H1 (cell line): ENCODE measurements at regions of chr2 and their contacts with region 1.

Region 1: GRCh38 chr2:160406591-160407392 is 86.8 kb downstream of the RBMS1 start:
- DNase-seq: peak in 1 of 2 experiments; percentile 72
- H3K4me3 ChIP-seq: peak overlapping the region; percentile 69 to 79 (median 72)
- H3K27ac ChIP-seq: no peak overlapping the region
- H3K4me1 ChIP-seq: peaks cover 4 to 24% (median 14%) of the 10 kb centered on the region in 4 experiments; a peak in 6 of 7 replicates
- H3K27me3 ChIP-seq: peaks cover 5 to 20% (median 11%) of the 10 kb centered on the region in 4 experiments; a peak in 6 of 7 replicates
- CTCF ChIP-seq: no peak
- EP300 ChIP-seq: no peak
- POLR2A ChIP-seq: no peak; a peak in 1 of 3 replicates
- RAD21 ChIP-seq: no peak

Region 2: GRCh38 chr2:160269803-160270570 is 136.8 kb before region 1 on chr2:
- CTCF ChIA-PET with region 1: no interaction called
- POLR2A ChIA-PET with region 1: no interaction called
- DNase-seq: peak; percentile 85
- H3K4me3 ChIP-seq: peak overlapping the region; percentile 28 to 60 (median 54)
- H3K27ac ChIP-seq: peak overlapping the region; percentile 57
- H3K4me1 ChIP-seq: peaks cover 3 to 17% (median 11%) of the 10 kb centered on the region in 4 experiments
- H3K27me3 ChIP-seq: peaks cover 2 to 10% (median 7%) of the 10 kb centered on the region in 4 experiments
- CTCF ChIP-seq: peak; percentile 56 to 74 (median 61)
- EP300 ChIP-seq: no peak
- POLR2A ChIP-seq: peak in 1 of 2 experiments; percentile 79; a peak in 2 of 3 replicates
- RAD21 ChIP-seq: peak; percentile 41 to 51

Region 3: DNA sequence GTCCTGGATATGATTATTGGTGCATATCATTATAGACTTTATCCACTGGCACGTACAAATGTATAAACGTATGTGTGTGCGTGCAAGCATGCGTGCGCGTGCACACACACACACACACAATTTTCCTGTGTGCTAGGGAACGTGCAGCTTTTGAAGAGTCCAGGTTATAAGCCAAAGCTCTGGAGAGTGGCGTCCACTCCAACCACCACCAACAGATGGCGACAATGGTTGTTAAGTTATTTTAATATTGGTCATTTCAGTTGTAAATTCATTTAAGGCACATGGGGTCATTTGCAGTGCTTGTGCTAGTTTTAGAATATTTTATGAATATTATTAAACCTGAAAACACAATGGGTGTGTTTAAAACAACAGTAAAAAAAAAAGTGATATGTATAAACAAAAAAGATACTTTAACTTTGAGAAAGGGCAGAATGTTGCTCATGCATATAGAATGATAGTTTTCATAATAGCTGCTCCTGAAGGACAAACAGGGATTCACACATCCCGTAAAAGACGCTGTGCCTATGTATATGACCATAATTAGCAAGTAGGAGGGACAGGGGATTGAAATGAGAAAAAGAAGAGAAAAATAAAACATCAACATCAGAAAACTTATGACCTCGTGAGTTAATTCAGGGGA is 82.5 kb before region 1 on chr2:
- CTCF ChIA-PET with region 1: interaction called, 15 read pairs
- POLR2A ChIA-PET with region 1: no interaction called
- DNase-seq: no peak
- H3K4me3 ChIP-seq: no peak overlapping the region
- H3K27ac ChIP-seq: no peak overlapping the region
- H3K4me1 ChIP-seq: peaks cover 2 to 5% (median 4%) of the 10 kb centered on the region in 4 experiments; a peak in 4 of 7 replicates
- H3K27me3 ChIP-seq: no peaks in the 10 kb centered on the region
- CTCF ChIP-seq: peak; percentile 14 to 61 (median 49); a peak in 3 of 4 replicates
- EP300 ChIP-seq: no peak
- POLR2A ChIP-seq: no peak
- RAD21 ChIP-seq: peak; percentile 55 to 67

Region 4: DNA sequence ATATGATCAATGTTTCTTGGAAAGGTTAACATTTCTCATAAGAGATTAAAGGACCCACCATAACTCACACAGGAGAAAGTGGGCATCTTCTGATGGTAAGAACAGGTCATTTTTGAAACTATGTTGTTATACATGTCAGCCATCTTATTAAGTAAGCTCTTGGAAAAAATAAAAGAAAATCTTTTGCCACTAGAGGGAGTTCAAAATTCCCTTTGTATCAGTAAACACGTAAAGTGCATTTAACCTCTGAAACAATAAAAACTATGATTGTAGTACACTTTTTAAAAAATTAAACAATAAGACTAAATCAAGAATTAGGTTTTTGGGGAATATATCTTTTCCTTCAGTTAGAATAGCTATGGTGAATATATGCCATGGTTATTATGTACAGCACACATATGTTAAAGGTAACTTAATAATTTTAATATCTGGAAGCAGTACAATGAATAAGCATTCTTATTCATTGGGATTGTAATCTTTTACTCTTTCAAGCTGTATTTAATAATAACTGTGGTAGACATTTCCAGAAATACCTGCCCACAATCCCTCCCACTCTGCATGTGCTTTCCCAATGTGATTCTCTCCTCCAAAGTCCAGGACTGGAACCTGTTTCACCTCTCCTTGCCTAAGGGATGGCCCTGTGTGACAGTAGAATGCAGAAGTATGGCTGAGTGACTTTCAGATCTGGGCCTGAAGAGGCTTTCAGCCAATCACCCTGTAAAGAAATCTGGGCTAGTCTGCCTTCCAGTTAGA is 22.6 kb after region 1 on chr2:
- CTCF ChIA-PET with region 1: interaction called, 38 read pairs
- POLR2A ChIA-PET with region 1: interaction called, 13 read pairs
- DNase-seq: no peak
- H3K4me3 ChIP-seq: no peak overlapping the region
- H3K27ac ChIP-seq: no peak overlapping the region
- H3K4me1 ChIP-seq: peaks cover 0 to 4% (median 2%) of the 10 kb centered on the region in 4 experiments; a peak in 2 of 7 replicates
- H3K27me3 ChIP-seq: no peaks in the 10 kb centered on the region
- CTCF ChIP-seq: peak in 1 of 3 experiments; percentile 20; a peak in 2 of 4 replicates
- EP300 ChIP-seq: no peak
- POLR2A ChIP-seq: no peak
- RAD21 ChIP-seq: no peak

Region 5: DNA sequence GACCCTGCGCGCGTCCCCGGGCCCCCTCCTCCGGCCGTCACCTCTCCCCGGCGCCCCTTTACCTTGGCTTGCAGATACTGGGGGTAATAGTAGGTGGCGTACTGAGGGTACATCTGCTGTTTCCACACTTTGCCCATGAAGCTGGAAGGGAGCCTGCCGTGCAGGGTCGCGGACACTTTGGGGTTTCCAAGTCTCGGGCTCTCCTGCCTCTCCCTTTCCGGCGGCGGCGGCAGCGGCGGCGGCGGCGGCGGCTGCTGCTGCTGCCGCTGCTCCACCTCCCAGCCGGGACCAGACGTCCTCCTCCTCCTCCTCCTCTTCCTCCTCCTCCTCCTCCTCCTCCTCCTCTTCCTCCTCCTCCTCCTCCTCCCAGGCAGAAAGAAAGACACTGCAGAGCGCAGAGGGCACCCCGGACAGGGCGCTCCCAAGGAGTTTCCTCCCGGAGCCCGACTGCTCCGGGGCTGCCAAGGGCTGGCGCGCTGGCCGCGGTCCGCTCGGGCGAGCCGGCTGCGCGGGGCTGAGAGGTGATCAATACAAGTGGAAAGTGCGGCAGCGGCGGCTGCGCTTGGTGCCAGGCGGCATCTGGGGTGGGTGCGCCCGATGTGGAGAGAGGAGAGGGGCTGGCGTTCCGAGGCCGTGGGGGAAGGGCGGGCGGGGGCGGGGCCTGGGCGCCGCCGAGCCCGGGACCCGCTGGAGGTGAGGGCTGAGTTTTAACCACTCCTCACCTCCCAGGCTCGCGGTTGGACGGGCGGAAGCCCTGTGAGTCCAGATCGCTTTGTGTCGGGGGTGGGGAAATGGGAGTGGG is 86.6 kb after region 1 on chr2 and contains the start of gene RBMS1:
- CTCF ChIA-PET with region 1: no interaction called
- POLR2A ChIA-PET with region 1: interaction called, 11 read pairs
- DNase-seq: peak in 1 of 2 experiments; percentile 78
- H3K4me3 ChIP-seq: peak within 1 kb of the TSS; percentile 76 to 99 (median 78)
- H3K27ac ChIP-seq: peak within 1 kb of the TSS; percentile 69; the same call in 1 of the 2 replicates
- H3K4me1 ChIP-seq: peaks cover 0 to 7% (median 4%) of the 10 kb centered on the region in 4 experiments; a peak in 4 of 7 replicates
- H3K27me3 ChIP-seq: no peaks in the 10 kb centered on the region
- CTCF ChIP-seq: no peak
- EP300 ChIP-seq: no peak
- POLR2A ChIP-seq: no peak
- RAD21 ChIP-seq: peak in 1 of 2 experiments; percentile 3; a peak in 1 of 4 replicates
- total RNA-seq, gene RBMS1: 57.0 and 60.0 TPM in 2 replicates

Region 6: DNA sequence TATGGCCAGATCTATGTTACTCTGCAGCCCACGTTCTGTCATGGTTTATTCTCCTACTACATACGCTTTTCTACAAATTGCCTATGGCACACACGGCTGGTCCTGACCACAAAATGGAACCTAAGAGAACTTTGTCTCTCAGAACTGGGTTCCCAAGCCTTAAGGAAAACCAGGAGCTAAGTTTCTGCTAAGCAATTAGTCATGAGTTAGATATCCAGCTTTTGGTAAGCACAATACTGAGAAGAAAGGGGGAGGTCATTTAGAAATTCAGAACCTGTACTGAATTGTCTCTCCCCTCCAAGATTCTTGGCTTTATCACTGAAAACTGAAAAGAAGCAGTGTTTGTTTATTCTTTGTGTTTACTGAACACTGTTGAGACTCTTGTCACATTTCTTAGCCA is 470.0 kb after region 1 on chr2:
- CTCF ChIA-PET with region 1: no interaction called
- POLR2A ChIA-PET with region 1: no interaction called
- DNase-seq: no peak
- H3K4me3 ChIP-seq: no peak overlapping the region
- H3K27ac ChIP-seq: no peak overlapping the region
- H3K4me1 ChIP-seq: no peaks in the 10 kb centered on the region
- H3K27me3 ChIP-seq: no peaks in the 10 kb centered on the region
- CTCF ChIP-seq: no peak
- EP300 ChIP-seq: no peak
- POLR2A ChIP-seq: no peak
- RAD21 ChIP-seq: no peak